ENCODE measurements at regions of chr1 and their contacts with region 1.

Region 1: DNA sequence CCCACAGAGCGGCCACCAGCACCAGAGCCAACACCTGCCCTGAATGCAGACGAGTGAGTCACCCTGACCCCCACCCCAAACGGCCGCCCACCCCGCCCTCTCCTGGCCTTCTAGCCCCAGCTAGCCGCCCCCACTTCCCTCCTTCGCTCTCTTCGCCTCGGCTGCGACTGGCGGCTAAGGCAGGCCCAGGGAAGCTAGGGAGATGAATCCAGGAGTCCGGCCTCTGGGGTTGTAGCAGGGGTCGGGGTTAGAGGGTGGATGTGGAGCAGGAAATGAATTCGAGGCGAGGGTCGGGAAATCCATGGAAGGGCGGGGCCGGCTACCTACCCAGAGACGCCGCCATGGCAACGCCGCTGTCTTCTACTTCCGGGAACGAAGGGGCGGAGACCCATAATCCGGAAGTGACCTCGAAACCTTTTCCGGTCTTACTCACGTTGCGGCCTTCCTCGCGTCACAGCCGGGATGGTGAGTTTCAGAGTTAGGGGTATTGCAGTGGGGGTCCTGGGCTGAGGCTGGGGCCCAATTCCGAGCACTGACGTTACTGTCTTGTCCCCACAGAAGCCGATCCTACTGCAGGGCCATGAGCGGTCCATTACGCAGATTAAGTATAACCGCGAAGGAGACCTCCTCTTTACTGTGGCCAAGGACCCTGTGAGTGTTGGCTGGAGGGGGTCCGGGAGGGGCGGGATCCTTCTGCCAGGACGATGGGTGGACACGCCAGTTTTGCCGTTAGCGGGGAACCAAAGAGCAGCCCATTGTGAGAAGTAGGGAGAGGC is at the starts of genes EIF3I and TMEM234:
- DNase-seq: peak; percentile 93 to 98 (median 96)
- ATAC-seq: peak; percentile 95
- H3K4me3 ChIP-seq: peak within 1 kb of the TSS; percentile 80
- H3K27ac ChIP-seq: peak within 1 kb of the TSS; percentile 90
- H3K4me1 ChIP-seq: peaks cover 19 to 22% of the 10 kb centered on the region in 2 experiments; a peak in 4 of 5 replicates
- H3K27me3 ChIP-seq: no peaks in the 10 kb centered on the region
- CTCF ChIP-seq: no peak
- EP300 ChIP-seq: no peak; the same call in 1 of the 2 replicates
- POLR2A ChIP-seq: peak; percentile 97
- RAD21 ChIP-seq: no peak
- polyA plus RNA-seq, gene EIF3I: 1,337 to 1,526 TPM
- polyA plus RNA-seq, gene TMEM234: 6.2 to 6.8 TPM

Region 2: DNA sequence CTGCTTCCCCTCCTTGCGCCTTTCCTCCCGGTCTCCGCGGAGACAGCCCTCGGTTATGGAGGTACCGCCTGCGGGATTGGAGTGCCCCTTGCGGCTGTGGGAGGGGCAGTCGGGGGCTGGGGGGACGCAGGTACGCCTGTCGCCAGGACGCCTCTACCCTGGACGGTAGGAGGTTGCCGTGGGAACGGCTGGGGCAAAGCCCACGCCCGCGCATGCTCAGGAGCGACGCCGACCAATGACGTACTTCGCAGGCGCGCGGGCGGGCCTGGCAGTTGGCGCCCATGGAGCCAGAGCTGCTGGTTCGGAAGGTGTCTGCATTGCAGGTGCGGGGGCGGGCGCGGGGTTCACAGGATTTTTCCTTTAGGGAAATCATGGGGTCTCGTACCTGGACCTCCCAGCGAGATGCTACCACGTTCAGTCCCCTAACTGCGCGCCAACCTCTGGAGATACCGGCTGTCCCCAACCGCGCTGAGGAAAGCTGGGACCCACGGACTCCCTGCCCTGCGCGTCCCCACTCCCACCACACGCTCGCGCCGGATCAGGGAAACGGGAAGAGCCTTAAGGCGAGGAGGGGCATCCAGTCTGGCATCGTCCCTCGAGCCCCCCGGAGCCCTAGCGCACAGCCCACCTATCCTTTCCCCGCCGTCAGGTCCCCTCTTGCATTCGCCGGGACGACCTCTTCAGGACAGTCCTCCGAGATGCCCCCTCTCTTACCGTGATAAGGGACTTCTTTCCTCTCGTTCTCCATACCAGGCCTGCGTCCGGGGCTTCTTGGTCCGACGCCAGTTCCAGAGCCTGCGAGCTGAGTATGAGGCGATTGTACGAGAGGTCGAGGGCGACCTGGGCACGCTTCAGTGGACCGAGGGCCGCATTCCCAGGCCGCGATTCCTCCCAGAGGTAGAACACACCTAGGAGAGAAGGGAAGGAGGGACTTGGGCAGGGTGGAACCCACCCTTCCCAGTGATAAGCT is 16.5 kb before region 1 on chr1 and contains the start of gene IQCC:
- CTCF ChIA-PET with region 1: no interaction called
- POLR2A ChIA-PET with region 1: interaction called, 17 read pairs
- in situ Hi-C with region 1: no loop called
- intact Hi-C with region 1: no loop called
- DNase-seq: peak; percentile 96 to 98 (median 97)
- ATAC-seq: peak; percentile 79
- H3K4me3 ChIP-seq: peak within 1 kb of the TSS; percentile 74
- H3K27ac ChIP-seq: peak within 1 kb of the TSS; percentile 87
- H3K4me1 ChIP-seq: peaks cover 22 to 47% of the 10 kb centered on the region in 2 experiments
- H3K27me3 ChIP-seq: no peaks in the 10 kb centered on the region
- CTCF ChIP-seq: peak in 2 of 3 experiments; percentile 23 to 30; a peak in 2 of 6 replicates
- EP300 ChIP-seq: peak; percentile 43
- POLR2A ChIP-seq: peak; percentile 94
- RAD21 ChIP-seq: peak in 1 of 2 experiments; percentile 10; a peak in 1 of 4 replicates
- polyA plus RNA-seq, gene IQCC: 8.4 to 10.4 TPM

Region 3: DNA sequence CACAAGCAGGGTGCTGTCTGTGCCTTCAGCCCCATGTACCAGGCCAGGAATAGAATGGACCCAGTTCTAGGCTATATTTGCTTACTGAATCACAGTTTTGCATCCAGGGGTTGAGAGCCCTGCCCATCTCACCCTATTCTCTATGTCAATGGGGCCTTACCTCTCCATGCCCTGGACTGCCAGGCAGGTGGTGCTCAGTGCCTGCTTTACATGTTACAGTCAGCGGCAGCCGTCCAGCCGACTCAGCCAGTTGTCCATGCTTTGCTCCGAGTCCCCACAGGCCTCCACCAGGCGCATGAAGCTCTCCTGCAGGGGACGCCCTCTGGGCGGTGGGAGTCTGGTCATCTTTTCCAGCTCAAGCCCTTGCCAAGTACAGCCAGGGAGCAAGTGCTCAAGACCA is 12.6 kb after region 1 on chr1:
- CTCF ChIA-PET with region 1: no interaction called
- POLR2A ChIA-PET with region 1: interaction called, 40 read pairs
- in situ Hi-C with region 1: no loop called
- intact Hi-C with region 1: no loop called
- DNase-seq: no peak
- ATAC-seq: no peak; the same call in 2 of the 3 replicates
- H3K4me3 ChIP-seq: no peak overlapping the region
- H3K27ac ChIP-seq: no peak overlapping the region; the same call in 2 of the 3 replicates
- H3K4me1 ChIP-seq: peaks cover 17 to 19% of the 10 kb centered on the region in 2 experiments; a peak in 4 of 5 replicates
- H3K27me3 ChIP-seq: no peaks in the 10 kb centered on the region
- CTCF ChIP-seq: no peak; a peak in 1 of 6 replicates
- EP300 ChIP-seq: no peak
- POLR2A ChIP-seq: no peak
- RAD21 ChIP-seq: 0 out of 4 replicates have a peak, but pooled peaks of 1 of the 2 experiments have one; percentile 7

Region 4: DNA sequence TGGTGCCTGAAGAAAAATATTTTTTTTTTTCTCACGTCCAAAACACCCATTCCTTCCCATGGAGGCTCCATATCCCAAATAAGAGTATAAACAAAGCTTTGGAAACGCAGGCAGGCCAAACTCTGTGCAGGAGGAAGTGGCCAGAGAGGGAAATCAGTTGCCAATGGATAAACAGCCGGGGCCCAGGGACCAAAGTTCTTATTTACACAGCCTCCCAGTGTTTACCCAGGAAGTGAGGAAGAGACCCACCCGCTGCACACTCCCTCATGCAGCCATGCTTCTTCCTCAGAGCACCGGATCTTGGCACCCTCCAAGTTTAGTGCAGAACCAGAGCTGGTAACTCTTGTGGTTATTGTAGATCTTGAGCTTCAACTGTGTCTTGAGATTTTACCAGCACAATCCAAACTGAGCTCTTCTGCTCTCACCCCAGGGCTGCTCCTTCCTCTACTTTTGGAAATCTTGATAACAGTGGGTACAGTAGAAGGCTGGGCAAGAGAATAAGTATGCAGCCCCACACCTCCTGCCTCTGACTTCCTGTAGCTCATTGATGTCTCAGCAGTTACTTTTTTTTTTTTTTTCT is 99.6 kb after region 1 on chr1:
- CTCF ChIA-PET with region 1: no interaction called
- POLR2A ChIA-PET with region 1: no interaction called
- in situ Hi-C with region 1: no loop called
- intact Hi-C with region 1: loop called (anchors 2 kb)
- DNase-seq: no peak
- ATAC-seq: no peak; the same call in 2 of the 3 replicates
- H3K4me3 ChIP-seq: no peak overlapping the region
- H3K27ac ChIP-seq: no peak overlapping the region
- H3K4me1 ChIP-seq: no peaks in the 10 kb centered on the region
- H3K27me3 ChIP-seq: no peaks in the 10 kb centered on the region
- CTCF ChIP-seq: no peak
- EP300 ChIP-seq: no peak
- POLR2A ChIP-seq: no peak
- RAD21 ChIP-seq: no peak

Measured in K562 (cell line).